CD4-positive, alpha-beta T cell (primary cell): ENCODE measurements at regions of chr17 and their contacts with region 1.

Region 1: DNA sequence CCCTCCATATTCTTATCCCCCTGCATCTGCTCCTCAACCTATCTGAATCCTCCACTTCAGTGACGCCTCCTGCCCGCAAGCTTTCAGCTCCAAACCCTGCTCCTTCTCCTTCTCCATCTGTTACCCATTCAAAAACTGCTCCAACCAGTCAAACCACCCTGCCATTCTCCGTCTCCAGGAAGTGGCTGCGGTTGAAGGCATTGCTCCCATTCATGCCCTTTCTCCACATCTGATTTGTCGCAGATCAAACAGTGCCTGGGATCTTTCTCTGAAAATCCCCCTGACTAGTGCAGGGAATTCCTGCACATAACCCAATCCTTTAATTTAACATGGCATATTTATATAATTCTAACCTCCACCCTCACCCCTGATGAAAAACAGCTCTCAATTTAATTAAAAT is 56.3 kb downstream of the SLFN5 start:
- DNase-seq: no peak
- ATAC-seq: no peak
- H3K4me3 ChIP-seq: no peak overlapping the region
- H3K4me3 Mint-ChIP-seq: no peak overlapping the region
- H3K27ac ChIP-seq: no peak overlapping the region
- H3K27ac Mint-ChIP-seq: no peak overlapping the region
- H3K4me1 ChIP-seq: no peaks in the 10 kb centered on the region
- H3K4me1 Mint-ChIP-seq: peaks cover 6% of the 10 kb centered on the region
- H3K27me3 ChIP-seq: no peaks in the 10 kb centered on the region
- H3K27me3 Mint-ChIP-seq: no peaks in the 10 kb centered on the region
- CTCF ChIP-seq: no peak

Region 2: DNA sequence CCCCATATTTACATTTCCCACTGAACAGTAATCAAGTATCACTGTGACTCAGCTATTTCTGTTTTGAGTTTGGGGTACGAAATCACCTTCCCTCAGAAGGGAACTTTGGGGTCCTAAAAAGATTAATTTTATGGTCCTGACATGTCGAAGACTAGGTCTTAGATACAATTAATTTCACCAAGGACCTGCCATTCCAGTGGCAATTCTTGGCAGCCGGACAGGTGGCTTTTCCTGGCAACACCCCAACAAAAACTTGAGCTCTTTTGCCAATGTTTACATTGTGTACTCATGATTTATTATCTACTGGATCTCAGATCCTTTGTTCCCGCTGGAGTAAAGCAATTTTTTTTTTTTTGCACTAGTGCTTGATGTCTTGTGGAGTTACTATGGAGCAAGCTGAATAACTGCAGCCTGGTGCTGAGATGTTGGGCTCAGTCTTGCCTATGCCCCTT is 41.9 kb before region 1 on chr17:
- CTCF ChIA-PET with region 1: interaction called, 3 read pairs
- POLR2A ChIA-PET with region 1: no interaction called
- intact Hi-C with region 1: loop called in 1 of 2 experiments (anchors 5 kb)
- DNase-seq: no peak
- ATAC-seq: no peak
- H3K4me3 ChIP-seq: no peak overlapping the region
- H3K4me3 Mint-ChIP-seq: peak overlapping the region; percentile 57
- H3K27ac ChIP-seq: peak overlapping the region in 1 of 2 donors; percentile 20
- H3K27ac Mint-ChIP-seq: peak overlapping the region; percentile 88
- H3K4me1 ChIP-seq: peaks cover 77% of the 10 kb centered on the region
- H3K4me1 Mint-ChIP-seq: peaks cover 83% of the 10 kb centered on the region
- H3K27me3 ChIP-seq: no peaks in the 10 kb centered on the region
- H3K27me3 Mint-ChIP-seq: no peaks in the 10 kb centered on the region
- CTCF ChIP-seq: no peak

Region 3: GRCh38 chr17:35273684-35274083 is 25.4 kb before region 1 on chr17:
- CTCF ChIA-PET with region 1: no interaction called
- POLR2A ChIA-PET with region 1: no interaction called
- intact Hi-C with region 1: no loop called
- DNase-seq: no peak
- ATAC-seq: no peak
- H3K4me3 ChIP-seq: no peak overlapping the region
- H3K4me3 Mint-ChIP-seq: no peak overlapping the region
- H3K27ac ChIP-seq: no peak overlapping the region
- H3K27ac Mint-ChIP-seq: peak overlapping the region; percentile 70
- H3K4me1 ChIP-seq: peaks cover 11% of the 10 kb centered on the region
- H3K4me1 Mint-ChIP-seq: peaks cover 67% of the 10 kb centered on the region
- H3K27me3 ChIP-seq: no peaks in the 10 kb centered on the region
- H3K27me3 Mint-ChIP-seq: no peaks in the 10 kb centered on the region
- CTCF ChIP-seq: no peak